ENCODE measurements at regions of chr17 and their contacts with region 1.

Region 1: DNA sequence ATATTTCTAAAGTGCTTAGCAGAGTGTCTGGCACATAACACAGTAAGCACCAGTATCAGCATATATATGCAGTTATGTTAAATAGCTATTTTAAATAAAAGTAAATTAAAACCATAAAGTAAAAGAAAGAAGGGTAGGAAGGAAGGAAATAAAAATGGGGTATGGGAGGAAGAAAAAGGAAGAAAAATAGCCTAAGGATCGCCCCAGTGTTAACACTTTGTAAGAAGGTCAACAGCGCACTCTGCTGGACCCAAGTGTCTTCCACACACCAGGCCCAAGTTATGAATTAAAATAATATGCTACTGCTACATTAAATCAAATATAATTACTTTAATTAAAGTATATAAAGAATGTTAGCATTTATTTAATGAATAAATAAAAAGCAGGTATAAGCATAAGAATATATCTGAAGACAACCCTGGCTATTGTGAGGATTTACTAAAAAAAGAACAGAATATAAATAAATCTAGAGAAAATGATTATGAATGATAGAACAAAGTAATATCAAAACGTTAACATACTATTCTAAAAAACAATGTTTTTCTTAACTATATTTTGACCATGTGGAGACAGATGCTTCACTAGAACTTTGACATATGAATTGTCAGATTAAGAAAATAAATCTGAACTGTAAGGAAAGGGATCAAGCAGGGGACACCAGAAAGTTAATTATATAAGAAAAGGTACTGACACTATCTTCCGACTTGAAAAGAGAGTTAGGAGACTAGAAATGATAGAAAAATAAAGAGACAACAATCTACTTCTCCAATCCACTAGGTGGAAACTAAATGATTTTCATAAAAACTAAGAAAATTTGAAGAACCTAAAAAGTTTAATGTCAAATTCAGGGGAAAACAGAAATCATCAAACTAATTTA is 25.9 kb downstream of the BRIP1 start:
- DNase-seq: peak; percentile 56
- H3K4me3 Mint-ChIP-seq: no peak overlapping the region
- H3K27ac Mint-ChIP-seq: no peak overlapping the region
- H3K4me1 Mint-ChIP-seq: no peaks in the 10 kb centered on the region
- H3K27me3 Mint-ChIP-seq: no peaks in the 10 kb centered on the region

Region 2: DNA sequence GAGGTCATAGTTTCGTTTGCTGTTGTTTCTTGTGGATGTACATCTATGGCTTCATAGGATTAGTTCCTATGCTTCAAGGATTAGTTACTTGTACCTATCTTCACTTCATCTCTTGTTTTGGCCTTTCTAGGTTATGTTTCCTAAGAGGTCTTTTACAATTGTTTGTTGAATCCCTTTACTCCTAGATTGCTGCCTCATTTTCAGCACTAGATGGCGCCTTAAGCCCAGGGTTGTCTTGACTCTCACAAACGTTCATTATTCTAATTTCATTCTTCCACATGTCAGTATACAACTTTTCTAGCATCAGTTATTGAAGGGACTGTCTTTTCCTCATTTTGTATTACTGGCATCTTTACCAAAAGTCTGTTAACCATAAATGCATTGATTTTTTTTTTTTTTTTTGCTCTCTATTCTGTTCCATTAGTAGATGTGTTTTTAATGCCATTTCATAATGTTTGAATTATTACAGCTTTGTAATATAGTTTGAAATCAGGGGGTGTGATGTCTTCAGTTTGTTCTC is 201.4 kb before region 1 on chr17:
- CTCF ChIA-PET with region 1: interaction called, 19 read pairs
- POLR2A ChIA-PET with region 1: no interaction called
- intact Hi-C with region 1: no loop called
- DNase-seq: peak; percentile 65
- H3K4me3 Mint-ChIP-seq: no peak overlapping the region
- H3K27ac Mint-ChIP-seq: no peak overlapping the region
- H3K4me1 Mint-ChIP-seq: no peaks in the 10 kb centered on the region
- H3K27me3 Mint-ChIP-seq: peaks cover 34% of the 10 kb centered on the region

Measured in activated CD4-positive, alpha-beta memory T cell treated with anti-CD3 and anti-CD28 coated beads for 36 hours (primary cell).